Endothelial cell of umbilical vein (primary cell): ENCODE measurements at regions of chr13 and their contacts with region 1.

Region 1: GRCh38 chr13:77898097-77898496 is 20.5 kb downstream of the EDNRB start:
- DNase-seq: peak; percentile 91
- H3K4me3 ChIP-seq: peak overlapping the region in 2 of 3 experiments; percentile 28 to 58
- H3K27ac ChIP-seq: peak overlapping the region; percentile 92
- H3K4me1 ChIP-seq: peaks cover 27% of the 10 kb centered on the region
- H3K27me3 ChIP-seq: no peaks in the 10 kb centered on the region
- CTCF ChIP-seq: no peak
- POLR2A ChIP-seq: no peak

Region 2: DNA sequence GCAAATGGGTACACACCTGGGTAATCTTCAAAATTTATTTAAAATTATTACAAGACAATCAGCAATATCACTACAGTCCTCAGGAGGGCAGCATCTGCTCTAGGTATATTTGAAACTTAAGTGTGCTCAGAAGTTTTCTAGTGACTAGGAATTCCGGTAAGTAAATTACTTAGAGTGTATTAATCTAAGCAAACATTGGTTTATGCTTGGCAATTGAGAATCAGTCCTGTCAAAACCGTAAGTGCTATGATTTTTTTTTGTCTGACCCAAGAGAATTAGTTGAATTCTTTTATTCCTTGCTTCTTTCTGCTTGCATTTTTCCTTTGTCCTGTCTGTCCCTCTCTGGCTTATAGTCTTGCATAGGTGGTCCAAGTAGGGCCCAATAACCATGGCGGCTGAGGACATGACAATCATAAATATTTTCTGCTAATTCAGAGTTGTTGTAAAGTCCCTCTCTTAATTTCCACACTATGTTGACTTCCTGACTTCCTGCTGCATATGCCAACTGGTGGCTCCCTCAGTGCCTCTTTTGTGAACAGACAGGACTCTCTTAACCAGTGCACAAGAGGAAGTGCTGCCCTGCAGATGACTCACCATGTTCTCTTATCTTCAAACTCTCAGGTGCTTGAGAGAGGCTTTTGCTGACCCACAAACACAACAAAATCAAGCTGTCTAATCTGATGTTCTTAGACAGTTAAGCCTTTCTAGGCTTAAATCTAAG is 118.4 kb before region 1 on chr13:
- CTCF ChIA-PET with region 1: no interaction called
- POLR2A ChIA-PET with region 1: no interaction called
- dilution Hi-C with region 1: no loop called
- intact Hi-C with region 1: loop called (anchors 1 kb)
- DNase-seq: peak; percentile 86
- H3K4me3 ChIP-seq: no peak overlapping the region
- H3K27ac ChIP-seq: peak overlapping the region; percentile 46
- H3K4me1 ChIP-seq: peaks cover 8% of the 10 kb centered on the region
- H3K27me3 ChIP-seq: no peaks in the 10 kb centered on the region
- CTCF ChIP-seq: peak; percentile 38 to 45
- POLR2A ChIP-seq: no peak

Region 3: DNA sequence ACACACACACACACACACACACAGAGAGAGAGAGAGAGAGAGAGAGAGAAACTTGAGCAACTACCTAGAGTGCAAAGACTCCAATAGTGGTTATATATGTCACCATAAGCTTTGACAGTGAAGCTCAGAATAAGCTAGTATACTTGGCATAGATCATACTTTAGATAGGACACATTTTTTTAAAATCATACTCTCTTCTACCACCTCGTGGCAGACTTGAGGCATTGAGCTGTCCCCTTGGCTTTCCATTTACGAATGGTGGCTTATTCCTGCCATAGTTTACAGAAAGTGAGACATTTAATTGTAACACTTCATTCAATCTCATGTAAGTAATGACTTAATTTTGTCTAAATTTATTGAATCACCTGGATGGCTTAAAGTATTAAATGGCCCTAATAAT is 87.7 kb before region 1 on chr13:
- CTCF ChIA-PET with region 1: interaction called, 5 read pairs
- POLR2A ChIA-PET with region 1: no interaction called
- dilution Hi-C with region 1: no loop called
- intact Hi-C with region 1: loop called (anchors 5 kb)
- DNase-seq: peak; percentile 45
- H3K4me3 ChIP-seq: no peak overlapping the region
- H3K27ac ChIP-seq: no peak overlapping the region
- H3K4me1 ChIP-seq: no peaks in the 10 kb centered on the region
- H3K27me3 ChIP-seq: peaks cover 5 to 8% of the 10 kb centered on the region in 2 experiments
- CTCF ChIP-seq: peak; percentile 26 to 43
- POLR2A ChIP-seq: no peak

Region 4: GRCh38 chr13:77860507-77860981 is 37.6 kb before region 1 on chr13:
- CTCF ChIA-PET with region 1: interaction called, 4 read pairs
- POLR2A ChIA-PET with region 1: no interaction called
- dilution Hi-C with region 1: no loop called
- intact Hi-C with region 1: loop called (anchors 2 kb)
- DNase-seq: peak; percentile 64
- H3K4me3 ChIP-seq: no peak overlapping the region
- H3K27ac ChIP-seq: no peak overlapping the region
- H3K4me1 ChIP-seq: peaks cover 4% of the 10 kb centered on the region
- H3K27me3 ChIP-seq: no peaks in the 10 kb centered on the region
- CTCF ChIP-seq: no peak
- POLR2A ChIP-seq: no peak

Region 5: DNA sequence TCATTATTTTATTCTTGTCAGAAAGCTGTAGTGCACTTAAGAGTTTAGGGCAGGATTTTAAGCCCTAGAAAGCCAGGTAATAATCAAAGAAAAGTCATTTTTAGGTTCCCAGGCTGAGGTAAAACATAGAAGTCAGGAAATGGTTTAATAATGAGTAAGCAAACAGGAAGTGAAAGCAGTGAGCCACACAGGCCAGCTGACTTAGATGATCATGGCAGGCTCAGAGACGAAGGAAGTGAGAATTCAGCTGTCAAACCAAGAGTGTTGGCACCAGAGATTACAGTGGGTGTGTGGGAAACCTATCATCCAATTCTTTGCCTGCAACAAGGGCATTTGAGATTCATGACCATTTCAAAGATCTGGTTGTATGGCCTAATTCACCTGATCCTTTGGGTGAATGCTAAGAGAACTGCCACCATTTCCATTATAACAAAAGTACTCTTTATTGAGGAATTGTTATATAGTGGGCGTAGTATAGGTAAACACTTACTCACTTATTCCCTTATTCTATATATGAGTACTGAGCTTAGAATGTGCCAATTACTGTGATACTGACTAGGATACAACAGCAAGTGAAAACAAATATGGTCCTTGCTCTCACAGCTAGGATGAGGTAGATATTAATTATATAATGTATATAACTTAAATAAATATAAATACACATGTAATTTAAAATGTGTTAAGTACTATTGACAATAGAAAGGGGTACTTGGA is 124.2 kb after region 1 on chr13:
- CTCF ChIA-PET with region 1: interaction called, 4 read pairs
- POLR2A ChIA-PET with region 1: no interaction called
- dilution Hi-C with region 1: no loop called
- intact Hi-C with region 1: loop called (anchors 2 kb)
- DNase-seq: peak; percentile 95
- H3K4me3 ChIP-seq: no peak overlapping the region
- H3K27ac ChIP-seq: peak overlapping the region; percentile 72
- H3K4me1 ChIP-seq: peaks cover 25% of the 10 kb centered on the region
- H3K27me3 ChIP-seq: no peaks in the 10 kb centered on the region
- CTCF ChIP-seq: no peak
- POLR2A ChIP-seq: no peak

Region 6: GRCh38 chr13:78032132-78032531 is 134.0 kb after region 1 on chr13:
- CTCF ChIA-PET with region 1: no interaction called
- POLR2A ChIA-PET with region 1: no interaction called
- dilution Hi-C with region 1: no loop called
- intact Hi-C with region 1: loop called (anchors 1 kb)
- DNase-seq: peak; percentile 96
- H3K4me3 ChIP-seq: no peak overlapping the region
- H3K27ac ChIP-seq: peak overlapping the region; percentile 66
- H3K4me1 ChIP-seq: peaks cover 21% of the 10 kb centered on the region
- H3K27me3 ChIP-seq: no peaks in the 10 kb centered on the region
- CTCF ChIP-seq: no peak
- POLR2A ChIP-seq: no peak

Region 7: GRCh38 chr13:78138756-78139155 is 240.7 kb after region 1 on chr13:
- CTCF ChIA-PET with region 1: no interaction called
- POLR2A ChIA-PET with region 1: no interaction called
- dilution Hi-C with region 1: no loop called
- intact Hi-C with region 1: no loop called
- DNase-seq: no peak
- H3K4me3 ChIP-seq: no peak overlapping the region
- H3K27ac ChIP-seq: no peak overlapping the region
- H3K4me1 ChIP-seq: peaks cover 4% of the 10 kb centered on the region
- H3K27me3 ChIP-seq: no peaks in the 10 kb centered on the region
- CTCF ChIP-seq: no peak
- POLR2A ChIP-seq: no peak